CD4-positive, alpha-beta memory T cell (primary cell): ENCODE measurements at regions of chr12 and their contacts with region 1.

Region 1: DNA sequence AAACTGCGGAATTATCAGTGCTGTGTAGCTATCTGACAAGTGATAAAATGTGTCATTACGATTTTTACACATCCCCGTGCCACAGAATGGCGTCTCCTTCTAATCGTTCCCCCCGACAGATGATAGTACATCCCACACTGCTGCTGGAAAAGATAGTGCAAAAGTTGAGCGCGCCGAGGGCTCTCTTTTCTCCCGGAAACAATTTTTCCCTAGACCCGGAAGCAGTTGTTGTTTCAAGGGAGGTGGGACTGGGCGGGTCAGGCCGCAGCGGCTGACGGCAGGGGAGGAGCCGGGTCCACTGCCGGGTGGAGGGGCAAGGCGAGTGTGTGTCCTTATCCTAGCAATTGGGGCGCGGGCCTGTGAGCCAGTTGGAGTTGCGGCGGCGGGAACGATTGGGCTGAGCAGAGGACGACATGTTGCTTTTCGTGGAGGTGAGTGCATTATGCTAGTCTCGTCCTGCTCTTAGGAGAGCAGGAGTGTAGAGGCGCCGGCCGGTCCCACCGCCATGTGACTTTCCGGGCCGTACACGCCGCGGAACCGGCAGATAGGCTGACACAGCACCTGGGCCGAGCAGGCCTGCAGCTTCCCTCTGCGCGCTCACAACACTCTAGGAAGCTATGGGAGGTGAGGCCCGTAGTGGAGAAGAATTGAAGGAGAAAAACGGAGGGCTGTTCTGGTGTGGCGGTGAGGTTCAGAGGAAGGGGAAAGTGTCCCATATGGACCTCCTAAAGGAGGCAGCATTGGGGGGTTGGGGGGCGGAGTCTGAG is at the start of gene LARP4:
- DNase-seq: peak; percentile 90 to 94 (median 91)
- H3K4me3 ChIP-seq: peak within 1 kb of the TSS; percentile 63 to 90
- H3K4me3 Mint-ChIP-seq: peak within 1 kb of the TSS; percentile 91 to 99 (median 97)
- H3K27ac ChIP-seq: peak within 1 kb of the TSS; percentile 76
- H3K27ac Mint-ChIP-seq: peak within 1 kb of the TSS; percentile 89 to 98 (median 95)
- H3K4me1 ChIP-seq: peaks cover 28% of the 10 kb centered on the region
- H3K4me1 Mint-ChIP-seq: peaks cover 19 to 42% (median 30%) of the 10 kb centered on the region in 4 donors
- H3K27me3 ChIP-seq: no peaks in the 10 kb centered on the region
- H3K27me3 Mint-ChIP-seq: peaks cover 1 to 5% of the 10 kb centered on the region in 2 donors
- total RNA-seq, gene LARP4: 38.7 to 40.7 TPM

Region 2: GRCh38 chr12:50283229-50283923 is 117.4 kb before region 1 on chr12 and contains the start of gene LIMA1:
- CTCF ChIA-PET with region 1: no interaction called
- POLR2A ChIA-PET with region 1: no interaction called
- intact Hi-C with region 1: loop called (anchors 1 kb)
- DNase-seq: peak; percentile 91 to 93 (median 91)
- H3K4me3 ChIP-seq: peak within 1 kb of the TSS; percentile 58 to 61
- H3K4me3 Mint-ChIP-seq: peak within 1 kb of the TSS; percentile 91 to 96 (median 92)
- H3K27ac ChIP-seq: peak within 1 kb of the TSS; percentile 70
- H3K27ac Mint-ChIP-seq: peak within 1 kb of the TSS; percentile 38 to 95 (median 87)
- H3K4me1 ChIP-seq: peaks cover 17% of the 10 kb centered on the region
- H3K4me1 Mint-ChIP-seq: peaks cover 9 to 18% (median 14%) of the 10 kb centered on the region in 4 donors
- H3K27me3 ChIP-seq: no peaks in the 10 kb centered on the region
- H3K27me3 Mint-ChIP-seq: no peaks in the 10 kb centered on the region
- total RNA-seq, gene LIMA1: 11.5 to 14.9 TPM

Region 3: DNA sequence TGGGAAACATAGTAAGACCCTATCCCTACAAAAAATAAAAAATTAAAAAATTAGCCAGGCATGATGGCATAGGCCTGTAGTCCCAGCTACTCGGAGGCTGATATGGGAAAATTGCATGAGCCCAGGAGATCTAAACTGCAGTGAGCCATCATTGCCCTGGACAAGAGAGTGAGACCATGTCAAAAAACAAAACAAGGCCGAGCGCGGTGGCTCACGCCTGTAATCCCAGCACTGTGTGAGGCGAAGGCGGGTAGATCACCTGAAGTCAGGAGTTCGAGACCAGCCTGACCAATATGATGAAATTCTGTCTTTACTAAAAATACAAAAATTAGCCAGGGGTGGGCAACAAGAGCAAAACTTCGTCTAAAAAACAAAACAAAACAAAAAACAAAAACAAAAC is 56.0 kb before region 1 on chr12:
- CTCF ChIA-PET with region 1: no interaction called
- POLR2A ChIA-PET with region 1: no interaction called
- intact Hi-C with region 1: no loop called
- DNase-seq: no peak
- H3K4me3 ChIP-seq: no peak overlapping the region
- H3K4me3 Mint-ChIP-seq: no peak overlapping the region
- H3K27ac ChIP-seq: no peak overlapping the region
- H3K27ac Mint-ChIP-seq: no peak overlapping the region
- H3K4me1 ChIP-seq: no peaks in the 10 kb centered on the region
- H3K4me1 Mint-ChIP-seq: no peaks in the 10 kb centered on the region
- H3K27me3 ChIP-seq: no peaks in the 10 kb centered on the region
- H3K27me3 Mint-ChIP-seq: peaks cover 3 to 9% of the 10 kb centered on the region in 2 donors